PC-9 (cell line): ENCODE measurements at regions of chr12 and their contacts with region 1.

Region 1: GRCh38 chr12:132560614-132561426 is 49.6 kb downstream of the LRCOL1 start:
- DNase-seq: peak; percentile 72 to 79
- H3K4me3 ChIP-seq: peak overlapping the region; percentile 70
- H3K27ac ChIP-seq: no peak overlapping the region
- H3K4me1 ChIP-seq: no peaks in the 10 kb centered on the region
- H3K27me3 ChIP-seq: no peaks in the 10 kb centered on the region
- CTCF ChIP-seq: peak; percentile 97

Region 2: GRCh38 chr12:132153501-132154340 is 407.1 kb before region 1 on chr12:
- CTCF ChIA-PET with region 1: no interaction called
- POLR2A ChIA-PET with region 1: no interaction called
- intact Hi-C with region 1: loop called (anchors 5 kb)
- DNase-seq: peak in 1 of 2 experiments; percentile 66
- H3K4me3 ChIP-seq: no peak overlapping the region
- H3K27ac ChIP-seq: no peak overlapping the region
- H3K4me1 ChIP-seq: no peaks in the 10 kb centered on the region
- H3K27me3 ChIP-seq: no peaks in the 10 kb centered on the region
- CTCF ChIP-seq: peak; percentile 93

Region 3: GRCh38 chr12:132414634-132415326 is 146.0 kb before region 1 on chr12:
- CTCF ChIA-PET with region 1: interaction called, 3 read pairs
- POLR2A ChIA-PET with region 1: no interaction called
- intact Hi-C with region 1: loop called (anchors 1 kb)
- DNase-seq: peak; percentile 53 to 84
- H3K4me3 ChIP-seq: no peak overlapping the region
- H3K27ac ChIP-seq: no peak overlapping the region
- H3K4me1 ChIP-seq: no peaks in the 10 kb centered on the region
- H3K27me3 ChIP-seq: peaks cover 50% of the 10 kb centered on the region
- CTCF ChIP-seq: peak; percentile 91

Region 4: GRCh38 chr12:132429946-132430643 is 130.7 kb before region 1 on chr12:
- CTCF ChIA-PET with region 1: no interaction called
- POLR2A ChIA-PET with region 1: interaction called, 13 read pairs
- intact Hi-C with region 1: no loop called
- DNase-seq: peak in 1 of 2 experiments; percentile 66
- H3K4me3 ChIP-seq: no peak overlapping the region
- H3K27ac ChIP-seq: no peak overlapping the region
- H3K4me1 ChIP-seq: peaks cover 5% of the 10 kb centered on the region; the same call in 1 of the 2 replicates
- H3K27me3 ChIP-seq: peaks cover 95% of the 10 kb centered on the region
- CTCF ChIP-seq: no peak

Region 5: GRCh38 chr12:132489602-132490239 is 71.1 kb before region 1 on chr12 and contains the start of gene FBRSL1:
- CTCF ChIA-PET with region 1: no interaction called
- POLR2A ChIA-PET with region 1: no interaction called
- intact Hi-C with region 1: loop called (anchors 1 kb)
- DNase-seq: peak; percentile 61 to 77
- H3K4me3 ChIP-seq: peak within 1 kb of the TSS; percentile 81
- H3K27ac ChIP-seq: no peak within 1 kb of the TSS
- H3K4me1 ChIP-seq: peaks cover 38% of the 10 kb centered on the region
- H3K27me3 ChIP-seq: peaks cover 43% of the 10 kb centered on the region
- CTCF ChIP-seq: no peak
- total RNA-seq, gene FBRSL1: 59.5 and 76.1 TPM in 2 replicates

Region 6: DNA sequence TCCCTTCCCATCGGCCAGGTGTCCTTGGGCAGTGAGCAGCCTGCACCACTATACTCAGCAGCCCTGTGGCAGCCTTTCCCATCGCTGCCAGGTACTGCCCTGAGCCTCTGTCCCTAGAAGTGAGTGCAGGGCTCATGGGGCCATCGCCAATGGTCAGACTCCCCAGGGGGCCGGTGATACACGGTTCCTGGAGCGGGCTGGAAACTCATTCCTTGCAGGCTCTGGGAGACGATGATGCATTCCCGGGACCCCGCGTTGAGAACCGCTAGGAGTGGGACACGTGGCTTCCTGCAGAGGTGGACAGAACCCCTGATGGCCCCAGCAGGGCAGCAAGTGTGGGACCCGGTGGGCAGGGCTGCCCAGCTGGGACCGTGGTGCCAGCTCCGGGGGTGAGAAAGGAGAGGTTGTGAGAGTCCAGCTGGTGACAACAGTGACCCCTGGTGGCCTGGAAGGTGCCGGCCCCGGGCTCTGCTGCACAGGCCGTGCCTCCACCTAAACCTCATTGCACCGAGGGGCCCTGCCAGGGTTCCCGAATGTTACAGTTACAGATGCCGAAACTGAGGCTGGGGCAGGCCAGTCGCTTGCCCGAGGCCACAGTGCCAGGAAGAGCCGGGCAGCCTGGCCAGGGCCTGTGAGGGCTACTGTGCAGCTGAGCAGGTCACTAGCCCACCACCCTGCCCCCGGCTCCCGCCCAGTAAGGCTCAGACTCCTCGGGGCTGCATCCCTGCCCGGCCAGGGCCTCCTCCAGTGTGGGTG is 37.1 kb before region 1 on chr12:
- CTCF ChIA-PET with region 1: no interaction called
- POLR2A ChIA-PET with region 1: no interaction called
- intact Hi-C with region 1: loop called (anchors 5 kb)
- DNase-seq: peak in 1 of 2 experiments; percentile 63
- H3K4me3 ChIP-seq: no peak overlapping the region
- H3K27ac ChIP-seq: no peak overlapping the region
- H3K4me1 ChIP-seq: peaks cover 26% of the 10 kb centered on the region
- H3K27me3 ChIP-seq: no peaks in the 10 kb centered on the region
- CTCF ChIP-seq: peak; percentile 83